ENCODE measurements at regions of chr3 and their contacts with region 1.

Region 1: DNA sequence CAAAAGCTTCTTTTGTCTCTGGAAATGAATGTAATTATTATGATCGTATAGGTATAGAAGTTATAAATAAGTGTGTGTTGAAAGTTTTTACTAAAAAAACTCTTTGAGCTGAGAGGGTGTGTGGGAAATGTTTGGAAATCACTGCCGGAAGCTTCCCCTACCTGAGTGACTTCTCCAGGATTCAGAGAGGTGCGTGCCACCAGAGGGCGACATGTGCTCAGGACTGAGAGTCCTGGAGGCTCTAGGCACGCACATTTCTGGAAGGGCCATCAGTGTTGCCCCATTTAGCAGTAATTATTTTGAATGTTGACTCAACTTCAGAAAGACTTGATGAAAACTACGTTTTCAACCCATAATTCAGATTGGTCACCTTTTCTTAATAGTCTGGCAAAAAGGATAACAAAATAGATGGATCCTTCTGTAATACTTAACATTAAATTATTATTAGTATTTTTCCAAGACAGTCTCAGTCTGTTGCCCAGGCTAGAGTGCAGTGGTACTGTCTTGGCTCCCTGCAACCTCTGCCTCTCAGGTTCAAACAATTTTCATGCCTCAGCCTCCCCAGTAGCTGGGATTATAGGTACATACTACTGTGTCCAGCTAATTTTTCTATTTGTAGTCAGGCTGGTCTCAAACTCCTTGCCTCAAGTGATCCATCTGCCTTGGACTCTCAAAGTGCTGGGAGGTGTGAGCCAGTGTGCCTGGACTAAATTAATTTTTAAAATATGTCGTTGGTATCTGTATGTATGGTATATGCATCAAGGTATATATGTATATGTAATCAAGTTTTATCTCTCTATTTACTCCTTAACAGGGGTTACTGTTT is 34.5 kb downstream of the GPR171 start:
- DNase-seq: peak; percentile 47 to 86 (median 72)
- ATAC-seq: peak; percentile 81 to 95 (median 89)
- H3K4me3 ChIP-seq: no peak overlapping the region
- H3K27ac ChIP-seq: no peak overlapping the region
- H3K4me1 ChIP-seq: no peaks in the 10 kb centered on the region
- H3K27me3 ChIP-seq: no peaks in the 10 kb centered on the region
- CTCF ChIP-seq: peak in 3 of 4 donors; percentile 56 to 67 (median 64)

Region 2: DNA sequence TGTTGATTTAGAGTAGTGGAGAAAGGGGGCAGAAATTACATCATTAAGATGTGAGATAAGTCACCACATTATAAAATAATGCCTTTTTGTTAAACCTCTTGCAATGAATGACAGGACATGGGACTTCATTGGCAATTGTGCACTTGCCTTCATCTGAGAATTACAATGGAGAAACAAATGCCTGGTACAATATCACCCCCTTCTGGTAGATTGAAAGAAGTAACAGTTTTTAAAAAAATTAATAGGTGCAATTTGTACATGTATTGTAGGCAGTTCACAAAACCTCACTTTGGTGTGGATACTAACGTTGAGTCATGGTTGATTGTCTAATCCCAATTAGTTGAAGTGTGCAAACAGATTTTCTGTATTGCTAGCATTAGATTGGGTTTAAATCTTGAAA is 114.4 kb after region 1 on chr3:
- intact Hi-C with region 1: loop called in 1 of 3 experiments (anchors 5 kb)
- DNase-seq: no peak
- ATAC-seq: peak; percentile 71 to 90 (median 89)
- H3K4me3 ChIP-seq: no peak overlapping the region
- H3K27ac ChIP-seq: no peak overlapping the region
- H3K4me1 ChIP-seq: no peaks in the 10 kb centered on the region
- H3K27me3 ChIP-seq: no peaks in the 10 kb centered on the region
- CTCF ChIP-seq: peak in 3 of 4 donors; percentile 34 to 53 (median 47)

Region 3: GRCh38 chr3:151912028-151912427 is 743.5 kb after region 1 on chr3:
- intact Hi-C with region 1: no loop called
- DNase-seq: no peak
- ATAC-seq: no peak
- H3K4me3 ChIP-seq: no peak overlapping the region
- H3K27ac ChIP-seq: no peak overlapping the region
- H3K4me1 ChIP-seq: no peaks in the 10 kb centered on the region
- H3K27me3 ChIP-seq: no peaks in the 10 kb centered on the region
- CTCF ChIP-seq: no peak

Measured in pancreas (tissue), 10 donors.